CD8-positive, alpha-beta T cell (primary cell): ENCODE measurements at regions of chr16 and their contacts with region 1.

Region 1: DNA sequence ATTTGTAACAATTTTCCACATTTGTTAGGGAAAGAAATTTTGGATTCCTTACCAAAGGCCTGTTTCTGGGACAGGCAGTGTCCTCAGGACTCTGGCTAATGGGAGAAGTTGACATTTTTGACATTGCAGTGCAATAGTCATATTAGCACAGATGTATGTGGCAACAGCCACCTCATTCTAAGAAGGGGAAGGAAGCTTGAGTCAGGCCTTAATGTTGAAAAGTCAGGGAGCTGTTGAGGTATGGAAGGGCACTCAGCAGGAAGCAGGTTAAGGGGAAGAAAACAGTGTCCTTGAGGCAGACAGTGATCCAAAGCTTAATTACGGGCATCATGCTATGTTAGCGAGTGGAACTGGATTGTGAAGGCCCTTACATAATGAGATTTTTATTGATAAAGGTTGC is 20.9 kb downstream of the AKTIP start:
- DNase-seq: no peak
- ATAC-seq: no peak
- H3K4me3 ChIP-seq: no peak overlapping the region
- H3K4me3 Mint-ChIP-seq: no peak overlapping the region
- H3K27ac ChIP-seq: peak overlapping the region in 1 of 2 experiments; percentile 12
- H3K27ac Mint-ChIP-seq: peak overlapping the region; percentile 73
- H3K4me1 ChIP-seq: peaks cover 12% of the 10 kb centered on the region
- H3K4me1 Mint-ChIP-seq: peaks cover 45% of the 10 kb centered on the region
- H3K27me3 ChIP-seq: no peaks in the 10 kb centered on the region
- H3K27me3 Mint-ChIP-seq: no peaks in the 10 kb centered on the region
- CTCF ChIP-seq: no peak

Region 2: DNA sequence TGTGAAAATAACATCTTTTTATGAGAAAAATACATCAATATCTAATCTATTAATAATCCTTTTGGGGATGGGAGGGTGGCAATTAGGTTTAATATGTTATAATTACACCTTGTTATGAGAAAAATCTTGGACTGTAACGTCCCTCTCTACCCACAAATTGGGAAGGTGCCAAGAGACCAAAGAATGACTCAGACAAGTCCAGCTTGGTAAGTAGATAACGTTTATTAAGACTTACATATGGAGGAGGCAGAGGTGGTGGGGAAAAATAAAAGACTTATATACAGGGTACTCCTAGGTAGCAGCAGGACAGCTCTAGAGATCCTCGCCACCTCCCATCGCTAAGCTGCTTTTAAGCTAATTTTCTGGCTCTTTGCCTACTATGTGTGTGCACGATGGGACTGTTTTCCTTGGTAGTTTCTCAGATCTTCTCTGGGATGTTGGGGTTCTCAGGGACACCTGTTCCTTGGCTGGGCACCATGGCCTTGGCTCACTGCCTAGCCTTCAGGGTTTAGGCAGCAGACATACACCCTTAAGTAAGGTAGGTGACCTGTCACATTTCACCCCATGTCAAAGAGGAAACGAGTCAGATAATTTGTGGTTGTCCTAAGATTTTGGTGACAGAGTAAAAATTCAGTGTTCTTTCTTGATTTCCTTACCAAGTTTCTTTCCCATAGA is 16.4 kb before region 1 on chr16:
- CTCF ChIA-PET with region 1: no interaction called
- POLR2A ChIA-PET with region 1: interaction called, 4 read pairs
- intact Hi-C with region 1: loop called in 1 of 2 experiments (anchors 2 kb)
- DNase-seq: no peak
- ATAC-seq: no peak
- H3K4me3 ChIP-seq: no peak overlapping the region
- H3K4me3 Mint-ChIP-seq: peak overlapping the region; percentile 37
- H3K27ac ChIP-seq: peak overlapping the region in 1 of 2 experiments; percentile 21
- H3K27ac Mint-ChIP-seq: peak overlapping the region; percentile 88
- H3K4me1 ChIP-seq: peaks cover 56% of the 10 kb centered on the region
- H3K4me1 Mint-ChIP-seq: peaks cover 69% of the 10 kb centered on the region
- H3K27me3 ChIP-seq: no peaks in the 10 kb centered on the region
- H3K27me3 Mint-ChIP-seq: no peaks in the 10 kb centered on the region
- CTCF ChIP-seq: no peak

Region 3: DNA sequence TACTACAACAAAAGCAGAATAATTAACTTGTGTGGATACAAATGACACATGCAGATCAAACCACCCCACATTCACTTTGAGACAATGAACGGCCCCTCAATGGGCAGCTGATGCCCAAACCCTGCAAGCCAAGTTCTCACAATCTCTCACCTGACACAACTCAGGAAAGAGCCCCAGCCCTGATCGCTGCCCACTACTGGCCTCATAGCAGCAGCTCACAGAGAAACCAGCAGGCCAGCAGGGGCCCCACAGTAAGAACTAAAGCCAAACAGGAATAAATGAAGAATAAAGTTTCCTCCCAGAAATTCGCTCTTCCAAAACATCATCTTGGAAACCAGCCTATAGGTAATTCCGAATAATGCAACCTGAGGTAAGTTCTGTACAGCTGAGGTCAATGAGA is 13.2 kb after region 1 on chr16:
- CTCF ChIA-PET with region 1: interaction called, 5 read pairs
- POLR2A ChIA-PET with region 1: interaction called, 4 read pairs
- intact Hi-C with region 1: loop called (anchors 2 kb)
- DNase-seq: no peak
- ATAC-seq: no peak
- H3K4me3 ChIP-seq: no peak overlapping the region
- H3K4me3 Mint-ChIP-seq: no peak overlapping the region
- H3K27ac ChIP-seq: no peak overlapping the region
- H3K27ac Mint-ChIP-seq: peak overlapping the region; percentile 71
- H3K4me1 ChIP-seq: peaks cover 25% of the 10 kb centered on the region
- H3K4me1 Mint-ChIP-seq: peaks cover 75% of the 10 kb centered on the region
- H3K27me3 ChIP-seq: no peaks in the 10 kb centered on the region
- H3K27me3 Mint-ChIP-seq: no peaks in the 10 kb centered on the region
- CTCF ChIP-seq: no peak

Region 4: DNA sequence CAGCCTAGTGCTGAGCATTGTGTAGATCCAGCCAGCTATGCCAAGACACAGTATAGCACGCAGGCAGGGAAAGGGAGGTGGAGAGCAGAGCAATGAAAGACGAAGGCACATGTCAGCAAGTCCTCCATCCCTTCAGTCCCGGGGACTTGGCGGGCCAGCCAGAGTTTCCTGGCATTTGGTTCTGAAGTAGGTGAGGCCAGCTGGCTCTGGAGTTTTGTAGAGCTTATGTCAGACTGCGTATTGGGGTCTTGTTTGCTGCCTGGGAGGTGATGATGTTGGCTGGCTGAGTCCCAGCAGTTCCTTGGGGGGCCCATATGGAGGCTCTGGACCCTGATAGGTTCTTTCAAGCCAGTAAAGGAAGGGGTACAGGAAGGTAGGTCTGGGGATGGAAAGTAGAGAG is 76.6 kb after region 1 on chr16:
- CTCF ChIA-PET with region 1: no interaction called
- POLR2A ChIA-PET with region 1: no interaction called
- intact Hi-C with region 1: no loop called
- DNase-seq: no peak
- ATAC-seq: no peak
- H3K4me3 ChIP-seq: no peak overlapping the region
- H3K4me3 Mint-ChIP-seq: no peak overlapping the region
- H3K27ac ChIP-seq: no peak overlapping the region
- H3K27ac Mint-ChIP-seq: no peak overlapping the region
- H3K4me1 ChIP-seq: no peaks in the 10 kb centered on the region
- H3K4me1 Mint-ChIP-seq: no peaks in the 10 kb centered on the region
- H3K27me3 ChIP-seq: no peaks in the 10 kb centered on the region
- H3K27me3 Mint-ChIP-seq: no peaks in the 10 kb centered on the region
- CTCF ChIP-seq: no peak